MCF 10A (cell line): ENCODE measurements at regions of chr6 and their contacts with region 1.

Region 1: GRCh38 chr6:6696867-6697531 is 108.5 kb downstream of the LY86 start:
- DNase-seq: peak; percentile 82
- H3K4me3 Mint-ChIP-seq: no peak overlapping the region
- H3K27ac Mint-ChIP-seq: peak overlapping the region; percentile 97
- H3K4me1 Mint-ChIP-seq: peaks cover 50% of the 10 kb centered on the region
- H3K27me3 Mint-ChIP-seq: no peaks in the 10 kb centered on the region
- CTCF ChIP-seq: peak; percentile 48

Region 2: GRCh38 chr6:6556738-6557505 is 140.1 kb before region 1 on chr6:
- CTCF ChIA-PET with region 1: no interaction called
- POLR2A ChIA-PET with region 1: interaction called, 11 read pairs
- intact Hi-C with region 1: loop called (anchors 5 kb)
- DNase-seq: peak; percentile 74
- H3K4me3 Mint-ChIP-seq: peak overlapping the region; percentile 2
- H3K27ac Mint-ChIP-seq: peak overlapping the region; percentile 90
- H3K4me1 Mint-ChIP-seq: peaks cover 59% of the 10 kb centered on the region
- H3K27me3 Mint-ChIP-seq: no peaks in the 10 kb centered on the region
- CTCF ChIP-seq: peak; percentile 70

Region 3: GRCh38 chr6:6686748-6687601 is 10.0 kb before region 1 on chr6:
- CTCF ChIA-PET with region 1: interaction called, 5 read pairs
- POLR2A ChIA-PET with region 1: interaction called, 22 read pairs
- intact Hi-C with region 1: loop called (anchors 1 kb)
- DNase-seq: peak; percentile 98
- H3K4me3 Mint-ChIP-seq: peak overlapping the region; percentile 72
- H3K27ac Mint-ChIP-seq: peak overlapping the region; percentile 76
- H3K4me1 Mint-ChIP-seq: peaks cover 44% of the 10 kb centered on the region
- H3K27me3 Mint-ChIP-seq: no peaks in the 10 kb centered on the region
- CTCF ChIP-seq: no peak

Region 4: DNA sequence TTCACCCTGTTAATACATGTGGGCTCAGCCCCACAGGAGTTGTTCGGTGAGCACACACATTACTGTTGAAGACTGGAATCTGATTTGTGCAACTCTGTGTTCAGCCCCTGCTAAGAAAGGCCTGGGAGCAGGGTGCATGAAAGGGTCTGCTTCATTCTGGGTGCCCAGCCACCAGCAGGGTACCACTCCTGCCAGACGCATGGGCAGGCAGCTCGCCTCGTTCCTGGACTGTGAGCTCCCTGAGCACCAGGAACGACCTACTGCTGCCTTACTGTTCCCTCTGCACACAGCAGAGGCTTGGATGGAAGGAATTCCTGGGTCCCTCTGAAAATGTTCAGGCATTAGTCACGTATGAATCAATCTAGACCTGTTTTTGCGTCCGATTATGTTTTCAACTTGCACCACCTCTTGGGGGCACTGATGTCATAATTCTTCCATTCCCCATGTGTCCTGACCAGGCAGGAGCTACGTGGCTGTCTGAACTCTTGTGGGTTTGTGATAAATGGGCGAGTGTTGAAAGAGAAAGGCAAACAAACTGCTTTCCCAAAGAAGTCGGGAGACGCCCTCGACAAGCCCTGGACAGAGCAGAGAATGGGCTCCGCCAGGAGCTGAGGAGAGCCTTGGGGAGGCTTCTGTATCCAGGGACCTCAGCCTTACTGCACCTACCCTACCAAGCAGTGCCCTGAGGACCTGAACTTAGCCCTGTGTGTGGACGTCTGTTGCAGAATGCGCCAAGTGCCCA is 15.4 kb after region 1 on chr6:
- CTCF ChIA-PET with region 1: interaction called, 10 read pairs
- POLR2A ChIA-PET with region 1: interaction called, 29 read pairs
- intact Hi-C with region 1: loop called (anchors 2 kb)
- DNase-seq: peak; percentile 96
- H3K4me3 Mint-ChIP-seq: peak overlapping the region; percentile 36
- H3K27ac Mint-ChIP-seq: peak overlapping the region; percentile 73
- H3K4me1 Mint-ChIP-seq: peaks cover 16% of the 10 kb centered on the region
- H3K27me3 Mint-ChIP-seq: no peaks in the 10 kb centered on the region
- CTCF ChIP-seq: no peak

Region 5: GRCh38 chr6:6724539-6725467 is 27.8 kb after region 1 on chr6:
- CTCF ChIA-PET with region 1: interaction called, 11 read pairs
- POLR2A ChIA-PET with region 1: interaction called, 10 read pairs
- intact Hi-C with region 1: no loop called
- DNase-seq: peak; percentile 77
- H3K4me3 Mint-ChIP-seq: peak overlapping the region; percentile 10
- H3K27ac Mint-ChIP-seq: peak overlapping the region; percentile 72
- H3K4me1 Mint-ChIP-seq: peaks cover 6% of the 10 kb centered on the region
- H3K27me3 Mint-ChIP-seq: no peaks in the 10 kb centered on the region
- CTCF ChIP-seq: peak; percentile 82

Region 6: GRCh38 chr6:6730831-6731230 is 33.8 kb after region 1 on chr6:
- CTCF ChIA-PET with region 1: no interaction called
- POLR2A ChIA-PET with region 1: interaction called, 10 read pairs
- intact Hi-C with region 1: no loop called
- DNase-seq: peak; percentile 83
- H3K4me3 Mint-ChIP-seq: no peak overlapping the region
- H3K27ac Mint-ChIP-seq: peak overlapping the region; percentile 84
- H3K4me1 Mint-ChIP-seq: peaks cover 21% of the 10 kb centered on the region
- H3K27me3 Mint-ChIP-seq: no peaks in the 10 kb centered on the region
- CTCF ChIP-seq: no peak